CD8-positive, alpha-beta T cell (primary cell): ENCODE measurements at regions of chr13 and their contacts with region 1.

Region 1: GRCh38 chr13:95403828-95404522 is 102.7 kb upstream of the ABCC4 start:
- DNase-seq: peak; percentile 52 to 86 (median 76)
- ATAC-seq: peak; percentile 94
- H3K4me3 ChIP-seq: peak overlapping the region; percentile 58 to 69
- H3K4me3 Mint-ChIP-seq: peak overlapping the region; percentile 91
- H3K27ac ChIP-seq: no peak overlapping the region
- H3K27ac Mint-ChIP-seq: no peak overlapping the region
- H3K4me1 ChIP-seq: peaks cover 8% of the 10 kb centered on the region
- H3K4me1 Mint-ChIP-seq: peaks cover 8% of the 10 kb centered on the region
- H3K27me3 ChIP-seq: no peaks in the 10 kb centered on the region
- H3K27me3 Mint-ChIP-seq: peaks cover 3% of the 10 kb centered on the region
- CTCF ChIP-seq: peak; percentile 93

Region 2: GRCh38 chr13:94620286-94620896 is 783.6 kb before region 1 on chr13:
- CTCF ChIA-PET with region 1: interaction called, 8 read pairs
- POLR2A ChIA-PET with region 1: no interaction called
- intact Hi-C with region 1: loop called in 1 of 2 experiments (anchors 5 kb)
- DNase-seq: peak in 4 of 9 experiments; percentile 14 to 50 (median 25)
- ATAC-seq: peak; percentile 73
- H3K4me3 ChIP-seq: no peak overlapping the region
- H3K4me3 Mint-ChIP-seq: no peak overlapping the region
- H3K27ac ChIP-seq: no peak overlapping the region
- H3K27ac Mint-ChIP-seq: no peak overlapping the region
- H3K4me1 ChIP-seq: no peaks in the 10 kb centered on the region
- H3K4me1 Mint-ChIP-seq: peaks cover 17% of the 10 kb centered on the region
- H3K27me3 ChIP-seq: no peaks in the 10 kb centered on the region
- H3K27me3 Mint-ChIP-seq: no peaks in the 10 kb centered on the region
- CTCF ChIP-seq: peak; percentile 65

Region 3: GRCh38 chr13:95181586-95181985 is 222.4 kb before region 1 on chr13:
- CTCF ChIA-PET with region 1: interaction called, 10 read pairs
- POLR2A ChIA-PET with region 1: no interaction called
- intact Hi-C with region 1: no loop called
- DNase-seq: no peak
- ATAC-seq: no peak
- H3K4me3 ChIP-seq: no peak overlapping the region
- H3K4me3 Mint-ChIP-seq: no peak overlapping the region
- H3K27ac ChIP-seq: no peak overlapping the region
- H3K27ac Mint-ChIP-seq: no peak overlapping the region
- H3K4me1 ChIP-seq: peaks cover 49% of the 10 kb centered on the region
- H3K4me1 Mint-ChIP-seq: peaks cover 82% of the 10 kb centered on the region
- H3K27me3 ChIP-seq: no peaks in the 10 kb centered on the region
- H3K27me3 Mint-ChIP-seq: no peaks in the 10 kb centered on the region
- CTCF ChIP-seq: no peak

Region 4: GRCh38 chr13:95301183-95301967 is 102.6 kb before region 1 on chr13 and contains the start of gene ABCC4:
- CTCF ChIA-PET with region 1: interaction called, 49 read pairs
- POLR2A ChIA-PET with region 1: interaction called, 5 read pairs
- intact Hi-C with region 1: loop called (anchors 1 to 5 kb)
- DNase-seq: peak in 8 of 9 experiments; percentile 33 to 75 (median 50)
- ATAC-seq: peak; percentile 77
- H3K4me3 ChIP-seq: peak within 1 kb of the TSS; percentile 74 to 79
- H3K4me3 Mint-ChIP-seq: peak within 1 kb of the TSS; percentile 82
- H3K27ac ChIP-seq: no peak within 1 kb of the TSS
- H3K27ac Mint-ChIP-seq: peak within 1 kb of the TSS; percentile 12
- H3K4me1 ChIP-seq: peaks cover 8% of the 10 kb centered on the region
- H3K4me1 Mint-ChIP-seq: peaks cover 24% of the 10 kb centered on the region
- H3K27me3 ChIP-seq: no peaks in the 10 kb centered on the region
- H3K27me3 Mint-ChIP-seq: no peaks in the 10 kb centered on the region
- CTCF ChIP-seq: no peak
- total RNA-seq, gene ABCC4: 3.3 to 3.4 TPM

Region 5: DNA sequence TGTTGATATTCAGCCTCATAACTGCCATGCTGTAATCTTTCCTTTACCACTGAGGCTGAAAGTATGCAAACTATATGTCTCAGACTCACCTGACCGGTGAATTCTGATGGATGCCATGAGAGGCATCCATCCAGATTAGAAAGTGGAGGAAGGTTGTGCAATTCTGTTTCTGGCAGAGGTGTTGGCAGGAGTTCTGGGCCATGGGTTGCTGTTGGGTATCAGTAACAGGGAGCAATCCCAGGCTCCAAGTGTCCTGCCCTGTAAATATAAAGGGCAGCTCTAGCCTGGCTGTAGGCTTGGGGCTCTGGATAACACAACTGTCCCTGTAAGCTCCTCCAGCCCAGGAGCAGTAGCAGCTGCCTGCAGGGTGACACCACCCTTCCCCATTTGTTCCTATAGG is 25.4 kb before region 1 on chr13:
- CTCF ChIA-PET with region 1: interaction called, 47 read pairs
- POLR2A ChIA-PET with region 1: no interaction called
- intact Hi-C with region 1: no loop called
- DNase-seq: no peak
- ATAC-seq: no peak
- H3K4me3 ChIP-seq: no peak overlapping the region
- H3K4me3 Mint-ChIP-seq: no peak overlapping the region
- H3K27ac ChIP-seq: no peak overlapping the region
- H3K27ac Mint-ChIP-seq: no peak overlapping the region
- H3K4me1 ChIP-seq: no peaks in the 10 kb centered on the region
- H3K4me1 Mint-ChIP-seq: peaks cover 3% of the 10 kb centered on the region
- H3K27me3 ChIP-seq: no peaks in the 10 kb centered on the region
- H3K27me3 Mint-ChIP-seq: peaks cover 11% of the 10 kb centered on the region
- CTCF ChIP-seq: no peak

Region 6: DNA sequence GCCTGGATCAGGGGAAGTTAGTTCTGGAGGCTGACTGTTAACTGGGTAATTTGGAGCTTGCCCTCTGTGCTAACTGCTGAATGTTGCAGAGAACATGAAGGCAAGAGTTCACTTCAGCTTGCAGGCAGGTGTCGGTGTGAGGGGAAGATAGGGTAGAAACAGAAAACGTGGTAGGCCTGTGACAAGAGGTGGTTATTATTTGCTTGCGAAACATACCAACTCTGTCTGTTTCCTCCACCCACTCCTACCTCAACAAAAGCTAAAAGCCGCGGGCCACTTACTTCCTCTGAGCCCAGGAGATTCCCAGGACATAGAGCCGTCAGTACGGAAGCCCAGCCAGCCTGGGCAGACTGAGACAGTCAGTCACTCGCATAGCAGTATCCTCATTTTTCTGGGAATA is 16.5 kb after region 1 on chr13:
- CTCF ChIA-PET with region 1: interaction called, 29 read pairs
- POLR2A ChIA-PET with region 1: interaction called, 4 read pairs
- intact Hi-C with region 1: no loop called
- DNase-seq: no peak
- ATAC-seq: no peak
- H3K4me3 ChIP-seq: no peak overlapping the region
- H3K4me3 Mint-ChIP-seq: no peak overlapping the region
- H3K27ac ChIP-seq: no peak overlapping the region
- H3K27ac Mint-ChIP-seq: no peak overlapping the region
- H3K4me1 ChIP-seq: no peaks in the 10 kb centered on the region
- H3K4me1 Mint-ChIP-seq: peaks cover 3% of the 10 kb centered on the region
- H3K27me3 ChIP-seq: peaks cover 0 to 4% of the 10 kb centered on the region in 2 experiments
- H3K27me3 Mint-ChIP-seq: peaks cover 4% of the 10 kb centered on the region
- CTCF ChIP-seq: no peak